Activated naive CD4-positive, alpha-beta T cell treated with anti-CD3 and anti-CD28 coated beads for 36 hours (primary cell): ENCODE measurements at regions of chr12 and their contacts with region 1.

Region 1: GRCh38 chr12:14910090-14910915 is 24.6 kb upstream of the MGP start:
- DNase-seq: peak; percentile 59
- H3K4me3 Mint-ChIP-seq: peak overlapping the region; percentile 22
- H3K27ac Mint-ChIP-seq: peak overlapping the region; percentile 90
- H3K4me1 Mint-ChIP-seq: peaks cover 44% of the 10 kb centered on the region
- H3K27me3 Mint-ChIP-seq: no peaks in the 10 kb centered on the region

Region 2: GRCh38 chr12:14824012-14824634 is 86.2 kb before region 1 on chr12:
- CTCF ChIA-PET with region 1: no interaction called
- intact Hi-C with region 1: loop called (anchors 1 kb)
- DNase-seq: no peak
- H3K4me3 Mint-ChIP-seq: no peak overlapping the region
- H3K27ac Mint-ChIP-seq: no peak overlapping the region
- H3K4me1 Mint-ChIP-seq: peaks cover 22% of the 10 kb centered on the region
- H3K27me3 Mint-ChIP-seq: peaks cover 1% of the 10 kb centered on the region